ENCODE measurements at regions of chr1 and their contacts with region 1.

Region 1: DNA sequence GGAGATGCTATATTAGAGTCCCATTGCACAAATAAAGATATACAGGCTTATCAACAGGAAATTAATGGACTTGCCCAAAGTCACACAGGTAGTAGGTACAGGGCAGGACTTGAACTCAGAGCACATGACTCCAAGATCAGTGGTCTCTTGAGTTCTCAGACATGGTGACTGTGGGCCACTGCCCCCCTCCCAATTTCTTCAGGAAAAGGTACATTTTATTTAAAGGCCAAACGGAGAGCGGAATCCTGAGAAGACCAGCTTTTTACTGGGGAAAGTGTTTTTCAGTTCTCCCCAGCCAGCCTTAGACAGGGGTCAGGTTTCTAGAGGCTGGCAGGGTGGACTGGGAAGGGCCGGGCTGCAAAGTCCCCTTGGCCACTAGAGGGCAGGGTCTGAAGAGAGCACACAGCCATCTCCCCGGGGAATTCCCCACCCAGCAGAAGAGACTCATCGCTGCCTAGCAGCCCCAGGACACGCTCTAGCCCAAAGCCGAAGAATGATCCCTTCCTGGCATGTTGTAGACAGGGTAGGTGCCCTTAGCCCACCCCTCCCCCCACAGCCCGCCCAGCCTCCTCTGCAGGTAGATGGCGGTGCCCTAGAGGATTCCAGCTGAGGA is 29.7 kb downstream of the ACP6 start:
- DNase-seq: peak; percentile 52 to 78
- ATAC-seq: peak; percentile 92 to 97
- H3K4me3 ChIP-seq: no peak overlapping the region
- H3K27ac ChIP-seq: no peak overlapping the region
- H3K4me1 ChIP-seq: peaks cover 6 to 7% of the 10 kb centered on the region in 2 donors
- H3K27me3 ChIP-seq: no peaks in the 10 kb centered on the region
- CTCF ChIP-seq: peak; percentile 73 to 87 (median 76)
- POLR2A ChIP-seq: no peak

Region 2: GRCh38 chr1:147273409-147274336 is 367.0 kb before region 1 on chr1:
- in situ Hi-C with region 1: loop called in 1 of 4 experiments (anchors 25 kb)
- intact Hi-C with region 1: no loop called
- DNase-seq: no peak
- ATAC-seq: peak; percentile 73 to 82
- H3K4me3 ChIP-seq: no peak overlapping the region
- H3K27ac ChIP-seq: peak overlapping the region; percentile 1 to 22 (median 12)
- H3K4me1 ChIP-seq: peaks cover 0 to 4% of the 10 kb centered on the region in 2 donors
- H3K27me3 ChIP-seq: no peaks in the 10 kb centered on the region
- CTCF ChIP-seq: peak in 4 of 5 experiments; percentile 15 to 49 (median 37)
- POLR2A ChIP-seq: no peak

Region 3: DNA sequence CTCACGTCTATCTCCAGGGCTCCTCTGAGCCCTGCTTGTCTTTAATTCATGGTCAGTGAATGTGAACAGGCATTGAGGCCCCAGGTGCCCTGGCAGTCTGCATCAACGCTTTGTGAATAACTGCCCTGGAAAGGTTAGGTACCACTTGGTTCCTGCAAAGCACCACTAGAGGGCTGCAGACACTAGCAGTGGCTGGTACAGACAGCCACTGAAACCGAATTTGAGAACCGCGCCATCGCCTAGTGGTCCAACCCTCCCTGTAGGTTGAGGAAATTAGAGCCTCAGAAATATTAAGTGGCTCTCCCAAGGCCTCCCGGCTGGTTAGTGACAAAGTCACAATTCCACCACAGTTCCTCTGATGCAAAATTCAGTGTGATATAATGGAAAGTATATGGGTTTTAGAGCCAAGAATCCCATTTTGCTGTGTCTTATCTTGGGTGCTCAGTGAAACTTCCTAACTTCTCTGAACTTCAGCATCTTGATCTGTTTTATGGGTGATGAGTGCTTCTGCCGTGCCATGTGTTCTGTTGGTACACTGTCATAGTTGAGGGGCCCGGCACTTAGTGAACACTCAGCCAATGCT is 145.6 kb before region 1 on chr1:
- in situ Hi-C with region 1: loop called in 1 of 4 experiments (anchors 10 kb)
- intact Hi-C with region 1: loop called (anchors 1 kb)
- DNase-seq: peak; percentile 32 to 59
- ATAC-seq: peak; percentile 92 to 95
- H3K4me3 ChIP-seq: no peak overlapping the region
- H3K27ac ChIP-seq: no peak overlapping the region
- H3K4me1 ChIP-seq: no peaks in the 10 kb centered on the region
- H3K27me3 ChIP-seq: no peaks in the 10 kb centered on the region
- CTCF ChIP-seq: peak; percentile 79 to 93 (median 81)
- POLR2A ChIP-seq: no peak

Region 4: DNA sequence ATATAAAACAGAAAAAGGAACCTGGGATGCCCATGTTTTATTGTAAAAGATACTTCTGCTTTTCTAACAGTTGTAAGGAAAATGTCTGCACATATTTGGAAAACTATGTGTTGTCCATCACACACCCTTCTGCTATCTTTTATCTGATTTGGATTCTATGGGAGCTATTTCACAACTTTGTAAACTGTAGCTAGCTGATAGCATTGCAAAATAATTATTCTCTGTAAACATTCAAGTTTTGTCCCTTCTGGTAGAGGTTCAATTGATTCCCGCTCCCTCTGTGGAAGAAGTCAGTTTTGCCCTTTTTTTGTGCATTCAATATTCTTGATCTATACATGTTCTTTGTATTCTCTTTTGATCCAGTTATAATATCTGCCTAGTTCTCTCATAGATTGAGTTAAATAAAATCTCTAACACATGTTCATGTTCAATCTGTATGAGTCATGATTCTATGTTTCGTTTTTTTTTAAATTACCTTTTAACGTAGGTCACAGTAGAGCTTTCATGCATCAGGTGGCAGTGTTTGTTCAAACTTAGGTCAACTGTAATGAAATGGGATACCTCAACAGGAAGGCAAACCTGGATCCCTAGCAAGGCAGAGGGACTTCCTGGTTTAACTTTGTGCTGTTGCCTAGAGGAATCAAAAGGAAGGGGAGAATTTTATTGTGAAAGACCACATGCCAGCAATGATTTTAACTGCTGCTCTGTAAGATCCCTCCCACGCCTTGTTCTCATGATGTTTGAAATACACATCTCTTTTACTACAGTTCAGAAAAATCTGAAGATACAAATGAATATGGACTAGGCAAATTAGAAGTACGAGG is 125.4 kb before region 1 on chr1:
- in situ Hi-C with region 1: loop called in 1 of 4 experiments (anchors 5 kb)
- intact Hi-C with region 1: loop called (anchors 1 kb)
- DNase-seq: peak; percentile 11 to 21
- ATAC-seq: peak; percentile 99 to 100
- H3K4me3 ChIP-seq: no peak overlapping the region
- H3K27ac ChIP-seq: peak overlapping the region in 3 of 4 donors; percentile 16 to 38 (median 32)
- H3K4me1 ChIP-seq: peaks cover 6 to 16% of the 10 kb centered on the region in 2 donors
- H3K27me3 ChIP-seq: no peaks in the 10 kb centered on the region
- CTCF ChIP-seq: peak in 4 of 5 experiments; percentile 29 to 48 (median 40)
- POLR2A ChIP-seq: no peak

Region 5: DNA sequence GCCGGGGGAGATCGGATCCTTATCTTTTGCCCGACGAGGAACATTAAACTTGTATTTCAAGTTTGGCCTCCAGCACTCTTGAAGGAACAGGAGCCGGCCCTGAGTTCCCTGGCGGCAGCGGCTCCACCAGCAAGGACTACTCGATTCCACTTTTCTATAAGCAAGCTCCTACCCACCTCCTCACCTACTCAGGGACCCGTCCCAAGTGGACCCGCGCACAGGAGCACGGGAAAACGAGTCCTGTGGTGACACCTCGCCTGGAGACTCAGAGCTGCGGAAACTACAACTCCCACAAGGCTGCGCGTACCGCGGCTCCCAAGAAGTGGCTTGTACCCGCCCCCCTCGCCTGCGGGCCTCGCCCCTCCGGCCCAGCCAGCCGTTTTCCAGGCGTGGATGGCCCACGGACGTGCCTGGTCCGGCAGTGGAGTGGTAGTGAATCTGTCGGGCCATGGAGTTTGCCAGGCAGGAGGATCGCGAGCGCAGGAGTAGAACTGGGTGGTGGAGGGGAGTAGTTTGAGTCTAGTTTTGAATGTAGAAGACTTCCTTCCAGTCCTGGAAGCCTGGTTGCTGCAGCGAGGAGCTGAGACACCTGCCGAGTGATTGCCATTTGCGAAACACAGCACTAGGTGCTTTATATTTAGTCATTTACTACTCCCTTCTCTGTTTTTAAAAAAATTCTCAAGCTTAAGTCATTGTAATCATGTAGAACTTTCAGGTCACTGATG is 29.8 kb after region 1 on chr1 and contains the start of gene ACP6:
- in situ Hi-C with region 1: no loop called
- intact Hi-C with region 1: no loop called
- DNase-seq: peak; percentile 92 to 93
- ATAC-seq: peak; percentile 96 to 98
- H3K4me3 ChIP-seq: peak within 1 kb of the TSS; percentile 79 to 89 (median 85)
- H3K27ac ChIP-seq: peak within 1 kb of the TSS; percentile 81 to 88 (median 85)
- H3K4me1 ChIP-seq: peaks cover 19 to 20% of the 10 kb centered on the region in 2 donors
- H3K27me3 ChIP-seq: no peaks in the 10 kb centered on the region
- CTCF ChIP-seq: no peak
- POLR2A ChIP-seq: peak; percentile 69 to 71
- total RNA-seq, gene ACP6: 3.9 to 11.4 (median 9.2) TPM

Region 6: GRCh38 chr1:147700042-147701006 is 59.7 kb after region 1 on chr1:
- in situ Hi-C with region 1: loop called in 2 of 4 experiments (anchors 10 kb)
- intact Hi-C with region 1: no loop called
- DNase-seq: peak; percentile 27 to 40
- ATAC-seq: peak; percentile 76 to 78
- H3K4me3 ChIP-seq: no peak overlapping the region
- H3K27ac ChIP-seq: no peak overlapping the region
- H3K4me1 ChIP-seq: no peaks in the 10 kb centered on the region
- H3K27me3 ChIP-seq: no peaks in the 10 kb centered on the region
- CTCF ChIP-seq: peak; percentile 49 to 80 (median 69)
- POLR2A ChIP-seq: no peak

Measured in gastrocnemius medialis (tissue), 4 donors.